Prostate gland (tissue), 2 donors: ENCODE measurements at regions of chr10 and their contacts with region 1.

Region 1: GRCh38 chr10:17847585-17848296 is 38.6 kb downstream of the MRC1 start:
- DNase-seq: no peak
- H3K4me3 ChIP-seq: no peak overlapping the region
- H3K27ac ChIP-seq: no peak overlapping the region
- H3K4me1 ChIP-seq: no peaks in the 10 kb centered on the region
- H3K27me3 ChIP-seq: no peaks in the 10 kb centered on the region
- CTCF ChIP-seq: peak in 1 of 4 experiments; percentile 36
- POLR2A ChIP-seq: no peak

Region 2: DNA sequence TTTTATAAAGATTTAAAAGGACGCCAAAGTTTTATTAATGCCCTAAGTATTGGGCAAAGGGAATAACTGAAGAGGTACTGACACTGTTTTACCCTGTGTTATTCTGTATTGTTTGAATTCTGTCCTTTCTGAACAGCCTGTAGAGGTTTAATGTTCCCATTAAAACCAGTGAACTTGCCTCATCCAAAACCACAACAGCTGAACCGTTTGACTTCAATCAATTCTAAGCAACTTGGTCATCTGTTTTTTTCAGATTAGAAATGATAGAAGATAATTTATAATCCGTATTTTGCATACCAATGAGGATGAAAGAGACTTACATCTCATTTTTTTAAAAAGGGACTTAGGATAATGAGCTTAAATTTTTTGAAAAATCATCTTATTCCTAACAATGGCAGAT is 271.0 kb before region 1 on chr10:
- intact Hi-C with region 1: no loop called
- DNase-seq: no peak
- H3K4me3 ChIP-seq: no peak overlapping the region
- H3K27ac ChIP-seq: no peak overlapping the region
- H3K4me1 ChIP-seq: no peaks in the 10 kb centered on the region
- H3K27me3 ChIP-seq: no peaks in the 10 kb centered on the region
- CTCF ChIP-seq: no peak
- POLR2A ChIP-seq: no peak

Region 3: DNA sequence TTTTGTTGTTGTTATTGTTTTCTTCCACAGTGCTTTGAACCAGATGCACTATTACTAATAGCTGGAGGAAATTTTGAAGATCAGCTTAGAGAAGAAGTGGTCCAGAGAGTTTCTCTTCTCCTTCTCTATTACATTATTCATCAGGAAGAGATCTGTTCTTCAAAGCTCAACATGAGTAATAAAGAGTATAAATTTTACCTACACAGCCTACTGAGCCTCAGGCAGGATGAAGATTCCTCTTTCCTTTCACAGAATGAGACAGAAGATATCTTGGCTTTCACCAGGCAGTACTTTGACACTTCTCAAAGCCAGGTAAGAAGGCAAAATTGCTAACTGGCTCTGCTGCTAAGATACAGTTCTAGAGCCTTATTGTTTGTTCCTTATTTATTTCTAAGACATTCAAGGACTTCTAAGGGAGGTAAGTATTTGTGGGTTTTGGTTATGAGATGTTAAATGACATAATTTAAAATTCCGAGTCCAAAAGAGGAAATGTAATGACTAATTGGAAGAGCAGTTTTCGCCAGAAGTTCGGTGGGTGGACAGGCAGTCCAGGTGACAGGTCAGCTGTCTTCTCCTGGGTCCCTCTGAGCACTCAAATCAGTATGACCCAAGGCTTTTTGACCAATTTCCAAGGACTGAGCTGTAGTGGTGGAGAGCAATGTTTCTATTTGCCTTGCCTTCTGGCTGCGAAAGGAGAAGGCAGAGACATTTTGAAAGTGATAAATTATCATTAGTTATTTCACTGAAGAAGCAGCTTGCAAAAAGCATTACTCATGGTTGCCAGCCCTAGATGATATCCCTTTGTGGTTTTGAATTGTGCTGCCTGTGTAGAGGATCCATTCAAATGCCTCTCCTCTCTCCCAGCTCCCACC is 114.0 kb after region 1 on chr10:
- intact Hi-C with region 1: no loop called
- DNase-seq: no peak
- H3K4me3 ChIP-seq: no peak overlapping the region
- H3K27ac ChIP-seq: no peak overlapping the region
- H3K4me1 ChIP-seq: no peaks in the 10 kb centered on the region
- H3K27me3 ChIP-seq: no peaks in the 10 kb centered on the region
- CTCF ChIP-seq: no peak
- POLR2A ChIP-seq: no peak

Region 4: DNA sequence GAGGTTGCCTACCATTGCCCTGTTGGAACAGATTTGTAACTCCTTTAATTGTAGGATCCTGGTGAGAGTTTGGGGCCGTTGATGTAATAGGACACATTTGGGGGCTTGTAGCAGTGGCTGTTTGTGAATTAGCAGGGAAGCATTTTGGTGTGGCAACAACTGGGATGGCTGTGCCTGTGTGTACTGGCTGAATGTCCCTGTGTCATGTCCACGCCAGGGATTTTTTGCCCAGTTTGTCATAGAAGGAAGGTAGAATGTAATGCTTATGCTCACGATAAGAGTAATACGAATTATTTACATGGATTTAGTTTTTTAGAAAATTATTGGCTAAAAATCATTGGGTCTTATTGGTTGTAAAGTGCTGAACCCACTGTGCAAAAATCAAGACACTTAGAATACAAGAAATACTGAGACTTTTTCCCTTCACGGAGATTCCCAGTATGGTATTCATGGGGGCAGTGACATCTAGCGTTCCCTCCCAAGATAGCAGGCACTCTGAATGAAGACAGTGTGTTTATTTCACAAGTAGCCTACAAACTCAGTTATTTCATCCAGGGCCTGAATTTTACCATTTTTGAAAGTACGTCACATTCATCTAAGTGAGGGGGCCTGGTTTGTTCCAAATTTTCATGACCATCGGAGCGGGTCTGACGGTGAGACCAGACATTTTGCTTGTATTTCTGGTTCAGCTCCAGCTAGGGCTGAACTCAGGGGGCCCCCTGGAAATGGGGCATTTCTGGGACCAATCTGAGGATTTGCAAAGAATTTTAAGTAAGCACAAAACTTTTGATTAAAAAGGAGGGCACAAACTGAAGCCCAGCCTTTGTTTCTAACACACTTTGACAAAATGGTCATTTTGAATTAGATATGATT is 367.2 kb after region 1 on chr10:
- intact Hi-C with region 1: loop called (anchors 5 kb)
- DNase-seq: peak; percentile 33
- H3K4me3 ChIP-seq: no peak overlapping the region
- H3K27ac ChIP-seq: no peak overlapping the region
- H3K4me1 ChIP-seq: no peaks in the 10 kb centered on the region
- H3K27me3 ChIP-seq: no peaks in the 10 kb centered on the region
- CTCF ChIP-seq: peak in 3 of 4 experiments; percentile 51 to 68 (median 63)
- POLR2A ChIP-seq: no peak

Region 5: DNA sequence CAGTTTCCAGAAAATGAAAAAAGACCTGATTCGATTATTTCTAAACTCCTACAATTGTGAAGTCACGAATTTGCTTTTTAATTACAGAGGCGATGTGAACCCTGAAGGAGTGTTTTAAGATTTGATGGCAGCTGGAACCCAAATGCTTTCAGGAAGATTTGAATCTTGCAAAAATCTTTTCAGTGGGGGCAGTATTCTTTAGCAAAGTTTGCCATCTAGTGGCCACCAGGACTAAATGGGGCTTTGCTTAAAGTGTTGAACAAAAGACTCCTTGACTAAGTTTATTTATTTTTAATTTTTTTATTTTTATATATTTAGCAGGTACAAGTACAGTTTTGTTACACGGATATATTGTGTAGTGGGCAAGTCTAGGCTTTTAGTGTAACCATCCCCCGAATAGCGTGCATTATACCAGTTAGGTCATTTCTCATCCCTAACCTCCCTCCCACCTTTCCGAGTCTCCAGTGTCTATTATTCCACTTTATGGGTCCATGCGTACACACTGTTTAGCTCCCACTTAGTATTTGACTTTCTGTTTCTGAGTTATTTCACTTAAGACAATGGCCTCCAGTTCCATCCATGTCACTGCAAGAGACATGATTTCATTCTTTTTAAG is 391.2 kb after region 1 on chr10:
- intact Hi-C with region 1: loop called (anchors 2 kb)
- DNase-seq: no peak
- H3K4me3 ChIP-seq: no peak overlapping the region
- H3K27ac ChIP-seq: no peak overlapping the region
- H3K4me1 ChIP-seq: no peaks in the 10 kb centered on the region
- H3K27me3 ChIP-seq: no peaks in the 10 kb centered on the region
- CTCF ChIP-seq: peak; percentile 16 to 59 (median 48)
- POLR2A ChIP-seq: no peak